ENCODE measurements at regions of chr6 and their contacts with region 1.

Region 1: GRCh38 chr6:113858480-113859348 is 1.6 kb downstream of the MARCKS start:
- DNase-seq: peak; percentile 87
- ATAC-seq: peak; percentile 69
- H3K4me3 ChIP-seq: peak overlapping the region; percentile 95
- H3K27ac ChIP-seq: peak overlapping the region; percentile 96
- H3K4me1 ChIP-seq: no peaks in the 10 kb centered on the region
- H3K27me3 ChIP-seq: no peaks in the 10 kb centered on the region
- CTCF ChIP-seq: peak; percentile 96
- POLR2A ChIP-seq: peak; percentile 71; the same call in 1 of the 2 replicates
- RAD21 ChIP-seq: peak; percentile 95

Region 2: GRCh38 chr6:112956696-112957528 is 901.8 kb before region 1 on chr6:
- CTCF ChIA-PET with region 1: no interaction called
- POLR2A ChIA-PET with region 1: no interaction called
- dilution Hi-C with region 1: no loop called
- in situ Hi-C with region 1: no loop called
- intact Hi-C with region 1: loop called (anchors 5 kb)
- DNase-seq: peak; percentile 95
- ATAC-seq: peak; percentile 90
- H3K4me3 ChIP-seq: no peak overlapping the region
- H3K27ac ChIP-seq: peak overlapping the region; percentile 81; the same call in 1 of the 2 replicates
- H3K4me1 ChIP-seq: peaks cover 2% of the 10 kb centered on the region
- H3K27me3 ChIP-seq: no peaks in the 10 kb centered on the region
- CTCF ChIP-seq: no peak
- POLR2A ChIP-seq: no peak
- RAD21 ChIP-seq: no peak

Region 3: GRCh38 chr6:113271437-113271836 is 587.3 kb before region 1 on chr6:
- CTCF ChIA-PET with region 1: no interaction called
- POLR2A ChIA-PET with region 1: interaction called, 14 read pairs
- dilution Hi-C with region 1: no loop called
- in situ Hi-C with region 1: no loop called
- intact Hi-C with region 1: no loop called
- DNase-seq: no peak
- ATAC-seq: no peak
- H3K4me3 ChIP-seq: no peak overlapping the region
- H3K27ac ChIP-seq: no peak overlapping the region
- H3K4me1 ChIP-seq: no peaks in the 10 kb centered on the region
- H3K27me3 ChIP-seq: no peaks in the 10 kb centered on the region
- CTCF ChIP-seq: no peak
- POLR2A ChIP-seq: no peak
- RAD21 ChIP-seq: no peak

Region 4: DNA sequence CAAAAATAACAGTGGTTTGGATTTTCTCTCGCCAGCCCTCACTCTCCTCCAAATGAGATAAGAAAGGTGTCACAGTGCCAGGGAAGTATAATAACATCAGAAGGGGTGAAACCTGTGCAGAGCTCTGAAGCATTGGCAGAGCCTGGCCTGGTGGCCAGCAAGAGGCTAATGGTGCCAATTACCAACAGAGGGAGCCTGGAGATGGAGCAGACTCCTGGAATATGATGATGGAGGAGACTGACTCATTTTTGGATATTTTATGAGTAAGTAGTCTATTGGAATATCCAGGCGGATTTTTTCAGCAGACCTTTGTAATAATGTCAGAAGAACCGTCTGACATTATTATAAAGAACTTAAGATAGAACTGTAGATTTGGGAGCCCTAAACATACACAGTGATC is 444.2 kb before region 1 on chr6:
- CTCF ChIA-PET with region 1: no interaction called
- POLR2A ChIA-PET with region 1: interaction called, 6 read pairs
- dilution Hi-C with region 1: no loop called
- in situ Hi-C with region 1: loop called (anchors 10 kb)
- intact Hi-C with region 1: loop called (anchors 1 kb)
- DNase-seq: peak; percentile 81
- ATAC-seq: peak; percentile 93
- H3K4me3 ChIP-seq: no peak overlapping the region
- H3K27ac ChIP-seq: no peak overlapping the region
- H3K4me1 ChIP-seq: peaks cover 4% of the 10 kb centered on the region; the same call in 1 of the 2 replicates
- H3K27me3 ChIP-seq: no peaks in the 10 kb centered on the region
- CTCF ChIP-seq: peak; percentile 68
- POLR2A ChIP-seq: no peak
- RAD21 ChIP-seq: peak; percentile 83

Region 5: GRCh38 chr6:113596387-113597230 is 262.1 kb before region 1 on chr6:
- CTCF ChIA-PET with region 1: no interaction called
- POLR2A ChIA-PET with region 1: no interaction called
- dilution Hi-C with region 1: no loop called
- in situ Hi-C with region 1: no loop called
- intact Hi-C with region 1: loop called (anchors 5 kb)
- DNase-seq: peak; percentile 48
- ATAC-seq: peak; percentile 55
- H3K4me3 ChIP-seq: no peak overlapping the region
- H3K27ac ChIP-seq: no peak overlapping the region; the same call in 1 of the 2 replicates
- H3K4me1 ChIP-seq: peaks cover 16% of the 10 kb centered on the region
- H3K27me3 ChIP-seq: no peaks in the 10 kb centered on the region
- CTCF ChIP-seq: no peak
- POLR2A ChIP-seq: no peak
- RAD21 ChIP-seq: no peak

Region 6: GRCh38 chr6:113903666-113904330 is 45.1 kb after region 1 on chr6:
- CTCF ChIA-PET with region 1: no interaction called
- POLR2A ChIA-PET with region 1: no interaction called
- dilution Hi-C with region 1: no loop called
- in situ Hi-C with region 1: no loop called
- intact Hi-C with region 1: loop called (anchors 1 kb)
- DNase-seq: peak; percentile 58
- ATAC-seq: peak; percentile 75
- H3K4me3 ChIP-seq: no peak overlapping the region
- H3K27ac ChIP-seq: no peak overlapping the region; the same call in 1 of the 2 replicates
- H3K4me1 ChIP-seq: peaks cover 5% of the 10 kb centered on the region
- H3K27me3 ChIP-seq: no peaks in the 10 kb centered on the region
- CTCF ChIP-seq: no peak
- POLR2A ChIP-seq: no peak
- RAD21 ChIP-seq: no peak

Region 7: GRCh38 chr6:115551527-115551926 is 1692.8 kb after region 1 on chr6:
- CTCF ChIA-PET with region 1: no interaction called
- POLR2A ChIA-PET with region 1: no interaction called
- dilution Hi-C with region 1: no loop called
- in situ Hi-C with region 1: no loop called
- intact Hi-C with region 1: no loop called
- DNase-seq: no peak
- ATAC-seq: no peak
- H3K4me3 ChIP-seq: no peak overlapping the region
- H3K27ac ChIP-seq: no peak overlapping the region
- H3K4me1 ChIP-seq: no peaks in the 10 kb centered on the region
- H3K27me3 ChIP-seq: no peaks in the 10 kb centered on the region
- CTCF ChIP-seq: no peak
- POLR2A ChIP-seq: no peak
- RAD21 ChIP-seq: no peak

Measured in IMR-90 (cell line).